Activated CD4-positive, alpha-beta memory T cell treated with anti-CD3 and anti-CD28 coated beads for 36 hours (primary cell): ENCODE measurements at regions of chr9 and their contacts with region 1.

Region 1: DNA sequence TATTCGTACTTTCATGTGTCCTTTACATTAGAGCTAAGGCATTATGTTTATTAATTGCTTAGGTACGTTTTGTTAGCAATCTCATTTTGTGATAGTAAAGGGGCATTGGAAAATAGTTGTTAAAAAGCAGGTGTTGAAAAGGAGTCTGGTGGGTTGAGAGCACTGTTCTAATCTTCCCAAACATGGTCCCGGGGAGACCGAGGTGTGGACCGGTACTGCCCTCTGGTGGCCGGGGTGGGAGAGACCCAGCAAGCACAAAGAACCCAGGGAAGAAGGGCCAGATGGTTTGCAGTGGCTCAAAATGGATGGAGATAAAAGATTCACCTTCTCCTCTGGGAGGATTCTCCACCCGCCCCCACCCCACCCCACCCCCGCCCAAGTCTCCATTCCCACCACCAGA is 26.1 kb downstream of the IDNK start:
- DNase-seq: peak; percentile 81
- H3K4me3 Mint-ChIP-seq: no peak overlapping the region
- H3K27ac Mint-ChIP-seq: no peak overlapping the region
- H3K4me1 Mint-ChIP-seq: peaks cover 1% of the 10 kb centered on the region
- H3K27me3 Mint-ChIP-seq: no peaks in the 10 kb centered on the region

Region 2: GRCh38 chr9:83636813-83637212 is 12.3 kb before region 1 on chr9:
- CTCF ChIA-PET with region 1: interaction called, 21 read pairs
- POLR2A ChIA-PET with region 1: no interaction called
- intact Hi-C with region 1: no loop called
- DNase-seq: no peak
- H3K4me3 Mint-ChIP-seq: no peak overlapping the region
- H3K27ac Mint-ChIP-seq: no peak overlapping the region
- H3K4me1 Mint-ChIP-seq: no peaks in the 10 kb centered on the region
- H3K27me3 Mint-ChIP-seq: no peaks in the 10 kb centered on the region

Region 3: DNA sequence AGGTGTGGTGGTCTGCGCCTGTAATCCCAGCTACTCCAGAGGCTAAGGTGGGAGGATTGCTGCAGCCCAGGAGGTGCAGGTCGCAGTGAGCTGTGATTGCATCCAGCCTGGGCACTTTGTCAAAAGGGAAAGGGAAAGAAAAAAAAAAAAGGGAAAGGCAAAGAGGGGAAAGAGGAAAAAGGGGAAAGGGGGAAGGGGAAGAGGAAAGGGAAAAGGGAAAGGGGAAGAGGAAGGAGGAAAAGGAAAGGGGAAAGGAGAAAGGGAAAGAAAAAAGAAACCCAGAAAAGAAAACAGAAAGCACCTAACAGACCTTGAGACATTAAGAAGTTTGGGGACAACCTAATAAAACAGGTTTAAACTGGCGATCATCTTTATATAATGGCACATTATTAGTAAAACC is 13.9 kb after region 1 on chr9:
- CTCF ChIA-PET with region 1: interaction called, 11 read pairs
- POLR2A ChIA-PET with region 1: no interaction called
- intact Hi-C with region 1: no loop called
- DNase-seq: no peak
- H3K4me3 Mint-ChIP-seq: no peak overlapping the region
- H3K27ac Mint-ChIP-seq: no peak overlapping the region
- H3K4me1 Mint-ChIP-seq: peaks cover 6% of the 10 kb centered on the region
- H3K27me3 Mint-ChIP-seq: no peaks in the 10 kb centered on the region